AG04449 (cell line): ENCODE measurements at regions of chr5 and their contacts with region 1.

Region 1: DNA sequence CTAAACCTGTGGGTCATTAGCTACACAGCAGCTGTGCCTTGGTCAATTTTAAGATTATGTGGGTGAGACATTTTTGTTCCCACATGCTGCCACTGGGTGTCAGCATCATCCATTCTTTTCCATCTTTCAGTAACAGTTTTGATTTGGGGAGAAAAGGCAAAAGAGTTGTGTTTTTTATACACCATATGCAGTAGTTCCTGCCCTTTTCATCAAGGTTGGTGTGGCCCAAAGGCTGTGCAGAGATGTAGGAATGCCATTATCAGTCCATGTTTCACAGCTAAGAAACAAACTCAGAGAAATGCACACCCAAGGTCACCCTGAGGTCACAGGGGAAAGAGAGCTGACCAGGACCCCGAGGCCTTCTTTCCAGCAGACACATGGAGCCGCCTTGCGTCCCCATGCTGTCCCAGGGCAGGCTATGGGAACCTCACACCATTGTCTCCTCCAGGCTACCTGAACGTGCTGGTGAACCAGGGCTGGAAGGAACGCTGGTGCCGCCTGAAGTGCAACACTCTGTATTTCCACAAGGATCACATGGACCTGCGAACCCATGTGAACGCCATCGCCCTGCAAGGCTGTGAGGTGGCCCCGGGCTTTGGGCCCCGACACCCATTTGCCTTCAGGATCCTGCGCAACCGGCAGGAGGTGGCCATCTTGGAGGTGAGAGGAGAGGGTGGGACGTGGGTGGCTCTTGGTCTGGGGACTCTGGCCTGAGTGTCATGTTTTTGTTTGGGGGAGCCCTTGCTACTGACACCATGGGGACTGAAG is 27.8 kb upstream of the GRPEL2 start:
- DNase-seq: no peak
- H3K4me3 ChIP-seq: no peak overlapping the region
- CTCF ChIP-seq: peak; percentile 54

Region 2: GRCh38 chr5:148620696-148621095 is 696.8 kb before region 1 on chr5:
- CTCF ChIA-PET with region 1: no interaction called
- POLR2A ChIA-PET with region 1: no interaction called
- DNase-seq: no peak
- H3K4me3 ChIP-seq: no peak overlapping the region
- CTCF ChIP-seq: no peak

Region 3: GRCh38 chr5:148711961-148712360 is 605.5 kb before region 1 on chr5:
- CTCF ChIA-PET with region 1: no interaction called
- POLR2A ChIA-PET with region 1: no interaction called
- DNase-seq: no peak
- H3K4me3 ChIP-seq: no peak overlapping the region
- CTCF ChIP-seq: no peak

Region 4: DNA sequence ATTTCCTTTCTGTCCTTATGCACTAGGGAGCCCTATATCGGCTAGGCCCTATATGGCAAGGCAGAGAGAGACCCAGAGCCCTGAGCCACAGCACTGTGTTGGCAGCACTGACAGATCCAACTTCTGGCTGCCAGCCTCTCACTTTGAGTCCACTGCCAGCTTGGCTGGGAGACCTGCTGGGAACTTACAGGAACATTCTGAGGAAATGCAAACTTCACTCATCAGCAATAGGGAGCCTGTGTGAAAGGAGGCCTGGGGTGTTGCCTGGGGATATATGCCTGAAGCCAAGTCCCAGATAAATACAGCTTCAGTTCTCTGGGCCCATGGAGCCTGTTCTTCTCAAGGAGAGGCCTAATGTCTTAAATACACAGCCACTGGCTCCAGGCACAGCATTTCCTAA is 413.0 kb before region 1 on chr5:
- CTCF ChIA-PET with region 1: no interaction called
- POLR2A ChIA-PET with region 1: no interaction called
- DNase-seq: no peak
- H3K4me3 ChIP-seq: no peak overlapping the region
- CTCF ChIP-seq: no peak

Region 5: DNA sequence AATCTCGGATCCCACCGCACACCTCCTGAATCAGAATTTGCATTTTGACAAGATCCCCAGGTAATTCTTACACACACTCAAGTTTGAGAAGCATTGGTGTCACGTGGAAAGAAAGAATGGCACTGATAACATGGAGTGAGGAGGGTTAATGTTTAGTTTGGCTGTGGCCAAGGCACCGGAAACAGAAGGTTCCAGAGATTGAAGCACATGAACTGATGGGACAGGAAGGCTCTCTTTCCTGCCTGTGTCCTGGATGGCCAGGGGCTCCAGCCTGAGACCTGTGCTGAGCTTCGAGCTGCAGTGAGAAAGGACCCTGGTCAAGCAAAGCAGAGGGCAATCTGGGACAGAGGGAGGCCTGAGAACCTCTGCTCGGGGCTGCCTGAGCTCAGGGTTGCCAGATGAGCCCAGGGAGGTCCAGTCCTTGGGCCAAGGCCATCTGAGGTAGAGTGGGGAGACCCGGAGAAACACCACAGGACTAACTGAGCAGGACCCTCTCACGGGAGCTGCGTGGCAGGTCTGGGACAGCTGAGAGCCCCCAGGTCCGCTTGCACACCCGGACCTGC is 18.5 kb before region 1 on chr5:
- CTCF ChIA-PET with region 1: interaction called, 42 read pairs
- POLR2A ChIA-PET with region 1: no interaction called
- DNase-seq: no peak
- H3K4me3 ChIP-seq: no peak overlapping the region
- CTCF ChIP-seq: no peak

Region 6: DNA sequence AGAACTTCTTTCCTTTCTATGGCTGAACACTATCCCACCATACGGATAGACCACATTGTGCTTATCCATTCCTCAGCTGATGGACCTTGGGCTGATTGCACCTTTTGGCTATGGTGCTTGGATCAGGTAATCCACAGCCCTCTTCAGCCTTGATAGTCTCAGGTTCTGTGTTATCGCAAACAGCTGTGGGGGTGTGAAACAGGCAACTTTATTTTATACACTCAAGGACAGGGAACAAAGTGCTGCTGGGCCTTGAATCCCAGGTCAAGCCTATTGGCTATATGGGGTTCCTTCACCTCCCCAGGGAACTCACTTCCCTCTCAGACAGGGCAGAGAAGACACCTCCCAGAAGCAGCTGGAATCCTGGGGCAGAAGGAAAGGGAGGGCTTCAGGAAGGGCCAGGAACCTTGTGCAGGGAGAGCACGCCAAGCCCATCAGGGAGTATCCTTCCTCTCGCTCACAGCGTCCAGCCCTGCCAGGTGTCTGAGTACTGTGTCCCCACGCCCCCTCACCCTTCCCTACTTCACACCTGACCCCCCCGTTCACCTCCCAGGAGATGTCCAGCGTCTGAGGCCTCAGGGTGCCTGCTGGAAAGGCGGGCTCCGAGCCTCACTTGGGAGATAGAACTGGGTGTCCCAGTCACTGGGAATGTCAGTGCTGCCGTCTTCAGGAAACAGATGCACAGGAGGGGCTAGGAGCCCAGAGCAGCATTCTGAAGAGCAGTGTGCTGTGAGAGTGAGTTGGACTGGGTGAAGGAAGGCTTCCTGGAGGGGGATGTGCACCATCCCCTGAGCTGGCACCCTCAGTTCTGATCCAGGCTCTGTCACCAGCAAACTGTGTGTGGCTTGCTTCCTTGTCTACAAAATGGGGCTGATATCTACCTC is 13.0 kb before region 1 on chr5:
- CTCF ChIA-PET with region 1: interaction called, 42 read pairs
- POLR2A ChIA-PET with region 1: no interaction called
- DNase-seq: no peak
- H3K4me3 ChIP-seq: no peak overlapping the region
- CTCF ChIP-seq: no peak

Region 7: DNA sequence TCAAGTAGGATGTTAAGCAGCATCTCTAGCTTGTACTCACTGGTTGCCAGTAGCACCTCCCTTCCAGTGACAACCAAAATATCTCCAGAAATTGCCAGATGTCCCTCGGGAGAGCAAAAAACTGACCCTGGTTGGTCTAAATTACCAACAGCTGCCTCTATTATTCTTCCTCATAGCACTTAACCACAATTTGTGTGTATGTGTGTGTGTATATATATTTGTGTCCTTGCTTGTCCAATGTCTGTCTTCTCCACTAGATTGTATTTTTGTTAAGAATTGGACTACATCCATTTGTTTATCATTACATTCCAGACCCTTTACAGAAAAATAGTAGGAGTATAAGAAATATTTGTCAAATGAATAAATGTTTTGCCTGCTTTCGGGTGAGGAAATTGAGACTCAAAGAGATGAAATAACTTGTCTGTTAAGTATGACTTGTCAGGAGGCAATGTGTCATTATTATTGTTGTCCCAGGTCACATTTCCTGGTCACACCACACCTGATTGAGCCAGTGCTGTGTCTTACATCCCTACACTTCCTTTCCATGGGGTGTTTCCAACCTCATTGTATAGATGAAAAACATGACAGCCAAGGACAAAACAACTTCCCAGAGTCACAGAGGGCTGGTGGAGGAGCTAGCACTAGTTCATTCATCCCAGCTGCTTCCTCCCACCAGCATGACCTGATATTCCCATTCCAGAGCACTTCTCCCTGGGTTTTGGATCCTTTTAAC is 16.4 kb after region 1 on chr5:
- CTCF ChIA-PET with region 1: interaction called, 15 read pairs
- POLR2A ChIA-PET with region 1: no interaction called
- DNase-seq: peak; percentile 33
- H3K4me3 ChIP-seq: no peak overlapping the region
- CTCF ChIP-seq: no peak

Region 8: GRCh38 chr5:149345147-149345875 is 27.8 kb after region 1 on chr5 and contains the start of gene GRPEL2:
- CTCF ChIA-PET with region 1: interaction called, 30 read pairs
- POLR2A ChIA-PET with region 1: interaction called, 11 read pairs
- DNase-seq: peak; percentile 82
- H3K4me3 ChIP-seq: peak within 1 kb of the TSS; percentile 97
- CTCF ChIP-seq: no peak

Region 9: DNA sequence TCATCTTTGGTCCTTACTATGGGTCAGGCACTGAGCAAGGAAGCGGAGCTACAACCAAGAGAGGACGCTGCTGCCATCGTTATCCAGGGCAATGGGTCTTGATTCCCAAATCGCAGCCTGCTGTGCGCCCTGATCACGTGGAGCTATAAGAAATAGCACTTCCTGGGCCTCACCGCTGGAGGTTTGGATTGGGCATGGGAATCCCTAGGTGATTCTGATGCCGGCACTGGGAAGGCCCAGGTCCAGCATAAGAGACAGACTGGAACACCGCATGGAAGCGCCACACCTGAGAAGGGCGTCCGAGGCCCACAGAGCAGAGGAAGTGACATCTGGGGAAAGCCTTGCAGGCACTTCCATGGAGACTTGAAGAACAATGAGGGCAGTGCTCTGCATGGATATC is 58.6 kb after region 1 on chr5:
- CTCF ChIA-PET with region 1: interaction called, 329 read pairs
- POLR2A ChIA-PET with region 1: no interaction called
- DNase-seq: no peak
- H3K4me3 ChIP-seq: no peak overlapping the region
- CTCF ChIP-seq: no peak

Region 10: DNA sequence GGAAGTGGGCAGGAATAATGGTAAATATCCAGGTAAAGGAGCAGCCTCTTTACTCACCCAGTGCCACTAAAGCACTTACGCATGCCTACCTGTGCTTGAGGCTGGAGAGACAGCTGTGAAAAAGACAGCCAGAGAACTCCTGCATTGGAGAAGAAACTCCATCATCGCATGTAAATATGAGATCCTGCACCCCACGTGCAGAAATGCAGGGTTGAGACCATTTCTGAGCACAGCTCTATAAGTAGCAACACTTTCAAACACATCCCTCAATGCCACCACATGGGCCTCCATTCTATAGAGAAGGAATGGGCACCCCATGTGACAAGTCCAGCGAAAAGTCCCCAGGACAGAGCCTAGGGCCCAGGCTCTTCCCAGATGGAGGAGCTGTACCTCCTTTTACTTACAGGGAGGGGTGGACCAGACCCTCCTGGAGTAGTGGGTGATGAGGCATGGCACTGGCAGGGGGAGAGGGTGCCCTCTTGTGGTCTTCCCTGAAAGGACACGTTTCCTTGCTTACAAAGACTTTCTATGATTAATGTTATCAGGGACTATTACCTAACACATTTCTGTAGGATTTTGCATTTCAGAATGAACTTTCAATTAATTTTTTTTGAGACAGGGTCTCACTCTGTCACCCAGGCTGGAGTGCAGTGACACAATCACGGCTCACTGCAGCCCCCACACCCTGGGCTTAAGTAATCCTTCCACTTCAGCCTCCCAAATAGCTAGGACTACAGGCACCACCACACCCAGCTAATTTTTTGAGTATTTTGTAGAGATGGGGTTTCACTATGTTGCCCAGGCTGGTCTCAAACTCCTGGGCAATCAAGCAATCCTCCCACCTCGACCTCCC is 116.9 kb after region 1 on chr5:
- CTCF ChIA-PET with region 1: interaction called, 17 read pairs
- POLR2A ChIA-PET with region 1: interaction called, 6 read pairs
- DNase-seq: no peak
- H3K4me3 ChIP-seq: no peak overlapping the region
- CTCF ChIP-seq: peak; percentile 86

Region 11: GRCh38 chr5:149828161-149828884 is 510.9 kb after region 1 on chr5:
- CTCF ChIA-PET with region 1: no interaction called
- POLR2A ChIA-PET with region 1: no interaction called
- DNase-seq: peak; percentile 79
- H3K4me3 ChIP-seq: no peak overlapping the region
- CTCF ChIP-seq: peak; percentile 88